MCF 10A (cell line): ENCODE measurements at regions of chr20 and their contacts with region 1.

Region 1: GRCh38 chr20:54657268-54657827 is 182.0 kb downstream of the DOK5 start:
- DNase-seq: no peak
- H3K4me3 Mint-ChIP-seq: no peak overlapping the region
- H3K27ac Mint-ChIP-seq: no peak overlapping the region
- H3K4me1 Mint-ChIP-seq: no peaks in the 10 kb centered on the region
- H3K27me3 Mint-ChIP-seq: peaks cover 45% of the 10 kb centered on the region
- CTCF ChIP-seq: no peak

Region 2: DNA sequence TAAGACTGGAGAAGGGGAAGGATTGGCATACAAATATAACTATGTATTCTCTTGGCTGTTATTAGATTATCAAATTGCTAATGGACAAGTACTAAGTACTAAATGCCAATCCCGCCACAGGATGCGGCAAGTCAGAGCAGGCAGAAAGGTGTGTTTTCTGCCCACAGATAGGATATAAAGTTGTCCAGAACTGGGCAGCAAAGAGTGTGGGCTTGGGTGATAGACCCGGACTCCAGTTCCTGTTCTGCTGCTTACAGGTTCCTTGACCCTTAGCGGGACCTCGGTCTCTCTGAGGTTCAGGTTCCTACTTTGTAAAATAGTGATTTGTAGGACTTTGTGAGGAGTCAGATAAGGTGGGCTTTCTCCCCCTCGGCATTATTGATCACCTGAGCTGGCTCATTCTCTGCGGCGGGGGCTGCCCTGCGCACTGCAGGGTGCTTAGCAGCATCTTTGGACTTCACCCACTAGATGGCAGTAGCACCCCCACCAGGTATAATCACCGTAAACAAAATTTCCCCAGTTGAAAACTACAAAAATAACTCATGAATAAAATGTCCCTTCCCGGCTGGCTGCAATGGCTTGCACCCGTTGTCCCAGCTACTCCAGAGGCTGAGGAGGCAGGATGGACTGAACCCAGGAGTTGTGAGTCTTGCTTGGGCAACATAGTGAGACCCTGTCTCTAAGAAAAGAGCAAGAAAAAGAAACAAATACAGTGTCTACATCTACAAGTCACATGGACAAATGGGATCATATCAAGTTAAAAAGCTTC is 11.1 kb after region 1 on chr20:
- CTCF ChIA-PET with region 1: interaction called, 30 read pairs
- POLR2A ChIA-PET with region 1: interaction called, 3 read pairs
- intact Hi-C with region 1: no loop called
- DNase-seq: peak; percentile 32
- H3K4me3 Mint-ChIP-seq: no peak overlapping the region
- H3K27ac Mint-ChIP-seq: no peak overlapping the region
- H3K4me1 Mint-ChIP-seq: no peaks in the 10 kb centered on the region
- H3K27me3 Mint-ChIP-seq: peaks cover 70% of the 10 kb centered on the region
- CTCF ChIP-seq: peak; percentile 54